Aorta (tissue), 5 donors: ENCODE measurements at regions of chr15 and their contacts with region 1.

Region 1: GRCh38 chr15:33700695-33701304 is 267.5 kb upstream of the CHRM5 start:
- DNase-seq: peak; percentile 63 to 87
- ATAC-seq: peak; percentile 87
- H3K4me3 ChIP-seq: no peak overlapping the region
- H3K27ac ChIP-seq: no peak overlapping the region
- H3K4me1 ChIP-seq: no peaks in the 10 kb centered on the region
- H3K27me3 ChIP-seq: no peaks in the 10 kb centered on the region

Region 2: DNA sequence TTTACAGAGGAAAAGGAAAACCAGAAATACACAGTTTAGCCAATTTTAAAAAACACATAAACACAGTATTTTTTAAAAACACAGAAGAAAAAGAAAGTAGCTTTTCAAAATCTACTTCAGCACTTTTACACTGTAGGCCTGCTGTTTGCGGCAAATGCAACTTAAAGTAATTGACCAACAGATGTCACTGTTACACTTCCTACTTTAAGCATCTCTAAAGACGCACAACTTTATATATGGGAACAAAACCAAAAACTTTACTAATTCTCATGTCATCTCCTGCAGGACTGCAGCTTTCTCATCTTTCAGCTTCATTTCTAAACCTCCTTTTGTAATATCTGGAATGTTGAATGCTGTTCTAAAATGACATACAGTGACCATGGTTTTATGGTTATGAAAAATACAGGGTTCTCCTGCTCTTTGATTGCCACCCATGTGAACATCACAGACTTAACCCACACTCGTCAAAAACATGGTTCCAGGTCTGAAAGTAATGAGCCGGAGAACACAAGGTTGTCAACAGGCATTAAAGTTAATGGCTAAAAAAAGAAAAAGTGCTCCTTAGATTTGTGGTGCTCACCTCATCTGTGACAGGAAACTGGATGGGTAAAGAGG is 614.2 kb before region 1 on chr15:
- intact Hi-C with region 1: loop called in 1 of 2 experiments (anchors 10 kb)
- DNase-seq: no peak
- ATAC-seq: peak; percentile 77
- H3K4me3 ChIP-seq: no peak overlapping the region
- H3K27ac ChIP-seq: no peak overlapping the region
- H3K4me1 ChIP-seq: no peaks in the 10 kb centered on the region
- H3K27me3 ChIP-seq: no peaks in the 10 kb centered on the region

Region 3: GRCh38 chr15:33234014-33234461 is 466.8 kb before region 1 on chr15:
- intact Hi-C with region 1: loop called in 1 of 2 experiments (anchors 2 kb)
- DNase-seq: no peak
- ATAC-seq: no peak
- H3K4me3 ChIP-seq: no peak overlapping the region
- H3K27ac ChIP-seq: no peak overlapping the region
- H3K4me1 ChIP-seq: no peaks in the 10 kb centered on the region
- H3K27me3 ChIP-seq: no peaks in the 10 kb centered on the region

Region 4: DNA sequence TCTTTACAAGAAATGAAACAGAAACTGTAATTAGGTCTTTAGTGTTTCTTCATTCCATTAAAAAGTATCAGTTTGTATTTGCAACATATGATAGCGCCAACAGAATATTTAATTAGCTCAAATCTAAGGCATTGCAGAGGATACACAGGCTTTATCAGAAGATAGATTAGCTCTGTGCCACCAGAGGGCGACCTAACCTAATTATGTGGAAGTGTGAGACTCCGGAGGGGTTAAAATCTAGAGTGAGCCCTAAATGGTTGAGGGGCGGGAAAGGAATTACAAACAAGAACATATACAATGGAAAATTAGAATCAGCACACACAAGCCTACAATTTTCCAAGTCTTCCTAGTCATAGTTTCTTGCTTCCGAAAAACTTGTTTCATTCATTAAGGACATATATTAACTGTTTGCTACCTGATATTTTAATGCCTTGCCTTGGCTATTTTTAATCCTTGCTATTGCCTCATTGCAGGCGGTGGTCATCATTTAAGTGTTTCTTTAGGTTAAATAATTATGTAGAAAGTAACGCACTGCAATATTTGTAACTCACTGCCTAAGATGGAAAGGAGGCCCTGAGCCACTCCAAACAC is 408.0 kb before region 1 on chr15:
- intact Hi-C with region 1: loop called (anchors 5 kb)
- DNase-seq: peak in 1 of 2 donors; percentile 57
- ATAC-seq: peak; percentile 82
- H3K4me3 ChIP-seq: peak overlapping the region in 1 of 2 donors; percentile 48
- H3K27ac ChIP-seq: peak overlapping the region in 1 of 2 donors; percentile 24
- H3K4me1 ChIP-seq: no peaks in the 10 kb centered on the region
- H3K27me3 ChIP-seq: no peaks in the 10 kb centered on the region

Region 5: DNA sequence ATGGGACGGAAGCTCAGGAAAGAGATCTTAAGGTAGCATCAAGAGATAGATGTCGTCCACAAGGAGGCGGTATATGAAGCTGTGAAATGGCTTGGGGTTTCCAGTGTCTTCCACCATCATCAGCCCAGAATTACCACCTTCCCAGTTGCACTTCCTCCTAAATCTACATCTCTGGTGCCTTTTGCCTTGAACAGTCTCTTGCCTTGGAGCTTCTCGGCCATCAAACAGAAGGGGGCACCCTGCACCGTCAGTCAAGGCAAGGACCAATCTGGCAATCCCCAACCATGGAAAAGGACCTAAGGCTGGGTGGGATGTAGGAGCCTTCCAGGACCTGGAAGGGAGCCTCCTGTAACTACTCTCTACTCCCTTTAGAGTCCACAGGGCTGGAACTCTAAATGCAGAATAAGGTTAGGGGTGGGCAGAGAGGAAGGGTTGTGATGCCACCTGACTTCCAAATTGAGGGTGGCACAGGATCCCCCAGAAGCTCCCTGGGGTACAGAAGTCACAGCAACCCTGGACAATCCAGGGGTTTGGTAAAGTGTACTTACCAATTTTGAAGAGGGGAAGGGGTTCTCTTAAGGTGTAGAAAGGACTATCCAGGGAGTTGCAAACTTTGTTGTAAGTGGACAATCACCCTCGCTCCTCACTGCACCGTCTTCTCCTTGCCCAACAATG is 391.1 kb before region 1 on chr15:
- intact Hi-C with region 1: loop called (anchors 5 kb)
- DNase-seq: peak; percentile 52 to 82
- ATAC-seq: peak; percentile 79
- H3K4me3 ChIP-seq: no peak overlapping the region
- H3K27ac ChIP-seq: no peak overlapping the region
- H3K4me1 ChIP-seq: no peaks in the 10 kb centered on the region
- H3K27me3 ChIP-seq: no peaks in the 10 kb centered on the region